Activated T-helper 2 cell treated with anti-CD3 and anti-CD28 coated beads, Interferon-gamma antibody, Interleukin-2, Interleukin-4, amounts not matched to agents 10 μg/mL and 5 μg/mL and 100 μg/mL, durations not matched to agents 14 hours and 24 hours and 36 hours (primary cell): ENCODE measurements at regions of chr4 and their contacts with region 1.

Region 1: GRCh38 chr4:80184053-80184790 is 13.1 kb upstream of the PRDM8 start:
- DNase-seq: peak; percentile 89
- H3K4me3 Mint-ChIP-seq: peak overlapping the region; percentile 99
- H3K27ac Mint-ChIP-seq: peak overlapping the region; percentile 95
- H3K4me1 Mint-ChIP-seq: peaks cover 49% of the 10 kb centered on the region
- H3K27me3 Mint-ChIP-seq: peaks cover 35% of the 10 kb centered on the region

Region 2: GRCh38 chr4:78938868-78939666 is 1245.2 kb before region 1 on chr4 and contains the start of gene PAQR3:
- intact Hi-C with region 1: loop called (anchors 5 kb)
- DNase-seq: peak; percentile 77
- H3K4me3 Mint-ChIP-seq: peak within 1 kb of the TSS; percentile 91
- H3K27ac Mint-ChIP-seq: peak within 1 kb of the TSS; percentile 63
- H3K4me1 Mint-ChIP-seq: peaks cover 35% of the 10 kb centered on the region
- H3K27me3 Mint-ChIP-seq: peaks cover 26% of the 10 kb centered on the region
- total RNA-seq, gene PAQR3: 11.0 and 13.1 TPM in 2 replicates

Region 3: GRCh38 chr4:79917246-79917645 is 267.0 kb before region 1 on chr4:
- intact Hi-C with region 1: loop called (anchors 2 kb)
- DNase-seq: peak; percentile 33
- H3K4me3 Mint-ChIP-seq: no peak overlapping the region
- H3K27ac Mint-ChIP-seq: no peak overlapping the region
- H3K4me1 Mint-ChIP-seq: peaks cover 15% of the 10 kb centered on the region
- H3K27me3 Mint-ChIP-seq: peaks cover 5% of the 10 kb centered on the region

Region 4: GRCh38 chr4:80072744-80073472 is 111.3 kb before region 1 on chr4 and contains the start of gene ANTXR2:
- intact Hi-C with region 1: loop called (anchors 1 kb)
- DNase-seq: peak; percentile 65
- H3K4me3 Mint-ChIP-seq: peak within 1 kb of the TSS; percentile 87
- H3K27ac Mint-ChIP-seq: peak within 1 kb of the TSS; percentile 75
- H3K4me1 Mint-ChIP-seq: peaks cover 71% of the 10 kb centered on the region
- H3K27me3 Mint-ChIP-seq: peaks cover 2% of the 10 kb centered on the region
- total RNA-seq, gene ANTXR2: 3.2 and 3.6 TPM in 2 replicates

Region 5: GRCh38 chr4:80153874-80154544 is 30.2 kb before region 1 on chr4:
- intact Hi-C with region 1: loop called (anchors 1 kb)
- DNase-seq: no peak
- H3K4me3 Mint-ChIP-seq: peak overlapping the region; percentile 59
- H3K27ac Mint-ChIP-seq: peak overlapping the region; percentile 97
- H3K4me1 Mint-ChIP-seq: peaks cover 18% of the 10 kb centered on the region
- H3K27me3 Mint-ChIP-seq: peaks cover 3% of the 10 kb centered on the region

Region 6: GRCh38 chr4:80215449-80216052 is 31.3 kb after region 1 on chr4:
- intact Hi-C with region 1: loop called (anchors 1 kb)
- DNase-seq: no peak
- H3K4me3 Mint-ChIP-seq: no peak overlapping the region
- H3K27ac Mint-ChIP-seq: no peak overlapping the region
- H3K4me1 Mint-ChIP-seq: peaks cover 1% of the 10 kb centered on the region
- H3K27me3 Mint-ChIP-seq: peaks cover 45% of the 10 kb centered on the region

Region 7: DNA sequence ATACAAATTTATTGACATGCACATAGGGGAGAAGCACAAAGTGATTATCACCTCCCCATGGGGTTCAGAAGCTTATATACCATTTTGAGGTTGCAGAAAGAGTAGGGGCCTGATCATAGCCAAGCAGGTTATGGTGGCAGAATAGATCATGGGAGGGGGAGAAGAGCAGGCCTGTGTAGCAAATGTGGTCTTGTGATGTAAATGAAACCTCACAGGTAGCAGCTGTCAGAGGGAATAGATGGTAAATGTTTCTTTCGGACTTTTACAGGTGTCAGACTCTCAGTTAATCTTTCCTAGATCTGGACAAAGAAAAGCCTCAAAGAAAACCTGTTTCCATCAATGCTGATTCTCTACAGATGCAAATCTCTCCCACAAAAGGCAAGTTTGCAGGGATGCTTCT is 235.7 kb after region 1 on chr4:
- intact Hi-C with region 1: no loop called
- DNase-seq: no peak
- H3K4me3 Mint-ChIP-seq: no peak overlapping the region
- H3K27ac Mint-ChIP-seq: no peak overlapping the region
- H3K4me1 Mint-ChIP-seq: peaks cover 3% of the 10 kb centered on the region
- H3K27me3 Mint-ChIP-seq: peaks cover 1% of the 10 kb centered on the region